Cardiac septum (tissue), 1 donor: ENCODE measurements at regions of chr15 and their contacts with region 1.

Region 1: DNA sequence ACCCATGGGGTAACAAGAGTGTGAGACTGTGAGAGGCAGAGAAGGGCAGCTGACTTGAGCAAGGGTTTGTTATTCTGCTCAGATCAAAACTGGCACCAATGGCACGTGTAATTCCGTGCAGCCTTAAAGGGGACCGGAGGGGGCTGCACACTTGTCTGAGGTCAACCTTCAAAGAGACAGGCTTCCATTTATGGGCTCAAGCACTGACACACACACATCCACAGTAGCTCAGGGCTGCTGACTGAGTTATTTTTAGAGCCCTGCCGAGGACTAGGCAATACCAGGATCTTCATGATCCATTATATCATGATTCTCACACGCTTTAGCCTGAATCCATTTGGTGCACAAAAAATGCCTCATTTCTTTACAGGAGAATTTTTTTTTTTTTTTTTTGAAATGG is 20.6 kb upstream of the SPTBN5 start:
- DNase-seq: peak; percentile 75

Region 2: DNA sequence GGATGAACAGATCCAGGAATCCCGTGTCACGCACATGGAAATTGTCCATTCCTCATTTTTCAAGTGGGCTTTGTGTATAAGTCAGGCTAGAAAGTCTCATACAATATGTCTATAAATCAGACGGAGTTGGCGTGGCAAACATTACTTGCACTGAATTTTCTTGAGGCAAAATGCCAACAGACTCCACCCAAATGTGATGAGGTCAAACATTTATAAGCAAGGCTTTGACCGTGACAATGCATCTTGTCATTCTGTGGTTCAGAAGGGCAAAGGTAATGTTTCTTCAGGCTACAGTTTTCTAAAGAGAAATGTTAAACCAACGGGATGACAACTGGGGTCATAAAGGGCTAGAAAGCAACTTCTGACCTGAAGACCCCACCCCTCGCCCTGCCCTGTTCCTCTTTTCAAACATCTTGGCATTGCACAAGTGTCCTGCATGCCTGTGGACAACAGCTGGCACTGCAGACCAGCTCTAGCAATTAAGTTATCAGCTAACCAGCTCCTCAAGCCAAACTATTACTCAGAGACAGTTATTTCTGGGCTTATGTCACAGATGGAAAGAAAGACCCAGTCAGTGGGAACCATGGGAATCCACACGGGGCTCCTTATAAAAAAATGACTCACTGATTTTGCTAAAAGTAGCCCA is 15.9 kb after region 1 on chr15:
- intact Hi-C with region 1: no loop called
- DNase-seq: peak; percentile 74

Region 3: GRCh38 chr15:41949401-41950126 is 35.2 kb after region 1 on chr15:
- intact Hi-C with region 1: loop called (anchors 5 kb)
- DNase-seq: no peak